Left cardiac atrium (tissue), 4 donors: ENCODE measurements at regions of chr18 and their contacts with region 1.

Region 1: GRCh38 chr18:24271381-24272331 is 126.0 kb downstream of the OSBPL1A start:
- DNase-seq: peak; percentile 77
- ATAC-seq: peak; percentile 89 to 91

Region 2: DNA sequence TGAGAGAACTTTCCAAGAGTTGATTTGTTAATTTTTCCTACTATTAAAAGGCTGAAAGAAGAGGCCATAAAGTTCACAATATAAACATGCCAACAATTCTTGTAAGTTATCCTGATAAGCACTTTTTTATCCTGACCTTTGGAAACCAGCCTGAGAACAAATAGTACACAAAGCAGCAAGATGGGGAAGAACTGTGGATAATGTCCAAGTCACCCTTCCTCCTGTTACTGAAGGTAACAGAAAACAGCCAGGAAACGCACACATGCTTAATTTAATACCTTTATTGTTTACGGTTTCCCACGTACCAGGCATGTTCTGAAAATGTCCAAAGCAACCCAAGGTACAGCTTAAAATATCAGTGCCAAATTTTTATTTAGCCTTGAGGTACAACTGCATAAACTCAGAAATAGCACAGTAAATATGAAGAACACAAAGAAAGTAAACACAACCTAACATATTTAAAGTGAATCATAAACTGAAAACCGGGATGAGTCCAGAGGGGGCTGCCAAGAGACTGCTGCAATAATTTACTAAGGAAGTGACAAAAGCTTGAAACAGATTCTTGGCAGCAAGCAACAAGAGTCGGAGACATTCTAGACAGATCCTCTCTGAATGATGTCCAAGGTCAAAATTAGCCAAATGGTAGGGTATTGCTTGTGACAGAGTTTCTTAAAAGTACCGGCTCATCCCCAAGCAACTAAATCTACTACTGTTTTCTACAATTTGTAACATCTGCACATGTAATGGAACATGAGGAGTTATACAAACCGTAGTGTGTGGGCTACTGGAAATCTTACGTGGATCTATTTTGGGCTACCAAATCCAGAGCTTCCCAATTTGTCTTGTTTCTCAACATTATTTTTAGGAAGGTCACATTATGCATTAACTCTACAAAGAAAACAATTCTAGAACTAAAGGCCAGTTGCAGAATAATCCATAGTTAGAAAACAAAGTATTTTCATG is 39.6 kb before region 1 on chr18:
- intact Hi-C with region 1: loop called in 1 of 2 experiments (anchors 5 kb)
- DNase-seq: no peak
- ATAC-seq: peak; percentile 75 to 77

Region 3: DNA sequence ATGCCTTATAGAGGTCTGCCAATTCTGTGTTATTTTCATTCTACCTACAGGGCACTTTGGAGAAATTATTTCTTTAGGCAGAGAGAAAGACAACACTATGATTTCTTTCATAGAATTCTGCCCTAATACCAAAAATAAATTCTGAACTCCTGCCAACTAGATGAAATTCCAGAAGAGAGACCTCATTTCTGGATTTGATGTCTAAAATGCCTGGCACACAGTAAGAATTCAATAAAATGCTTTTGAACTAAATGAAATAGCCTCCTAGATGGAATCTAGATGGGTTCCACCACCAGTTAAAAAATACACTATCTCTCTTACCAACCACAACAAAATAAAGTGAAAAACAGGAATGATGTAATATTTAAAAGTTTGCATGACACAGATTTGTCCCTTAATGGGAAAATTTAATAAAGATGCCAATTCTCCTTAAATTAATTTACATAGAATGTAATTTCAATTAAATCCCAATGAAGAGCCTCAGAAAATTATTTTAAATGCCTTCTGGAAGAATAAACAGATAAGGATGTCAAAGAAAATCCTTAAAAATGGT is 51.0 kb after region 1 on chr18:
- intact Hi-C with region 1: loop called in 1 of 2 experiments (anchors 10 kb)
- DNase-seq: no peak
- ATAC-seq: no peak

Region 4: GRCh38 chr18:25262920-25263319 is 991.3 kb after region 1 on chr18:
- intact Hi-C with region 1: no loop called
- DNase-seq: no peak
- ATAC-seq: peak in 1 of 2 donors; percentile 46